ENCODE measurements at regions of chr5 and their contacts with region 1.

Region 1: GRCh38 chr5:67100301-67100700 is 96.3 kb downstream of the CD180 start:
- DNase-seq: peak; percentile 59
- ATAC-seq: peak; percentile 89
- H3K4me3 Mint-ChIP-seq: peak overlapping the region; percentile 15
- H3K27ac Mint-ChIP-seq: peak overlapping the region; percentile 66
- H3K4me1 Mint-ChIP-seq: peaks cover 12% of the 10 kb centered on the region
- H3K27me3 Mint-ChIP-seq: no peaks in the 10 kb centered on the region

Region 2: DNA sequence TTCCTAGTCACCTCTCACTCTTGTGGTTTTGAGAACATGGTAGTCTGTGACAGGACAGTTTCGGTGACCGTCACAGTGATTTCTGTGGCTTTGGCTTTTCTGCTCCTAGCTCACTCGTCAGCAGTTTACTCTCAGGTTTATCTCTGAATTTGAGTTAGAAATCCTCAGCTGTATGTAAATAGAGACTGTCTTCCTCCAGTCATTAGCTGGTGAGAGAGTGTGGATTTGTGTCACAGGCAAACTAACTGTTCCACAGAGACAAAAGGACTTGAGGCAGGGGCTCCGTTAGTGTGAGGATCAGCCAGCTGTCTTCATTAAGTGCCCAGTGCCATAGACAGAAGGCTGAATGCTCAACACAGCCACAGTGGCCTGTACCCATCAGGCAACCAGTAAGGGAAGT is 35.1 kb before region 1 on chr5:
- CTCF ChIA-PET with region 1: no interaction called
- POLR2A ChIA-PET with region 1: no interaction called
- intact Hi-C with region 1: loop called in 1 of 2 experiments (anchors 2 kb)
- DNase-seq: peak; percentile 64
- ATAC-seq: peak; percentile 73
- H3K4me3 Mint-ChIP-seq: no peak overlapping the region
- H3K27ac Mint-ChIP-seq: peak overlapping the region; percentile 59
- H3K4me1 Mint-ChIP-seq: peaks cover 26% of the 10 kb centered on the region
- H3K27me3 Mint-ChIP-seq: no peaks in the 10 kb centered on the region

Measured in activated CD4-positive, alpha-beta T cell treated with anti-CD3 and anti-CD28 coated beads for 36 hours (primary cell).